Activated CD8-positive, alpha-beta T cell treated with anti-CD3 and anti-CD28 coated beads, Interleukin-2, amount 10 ng/mL, durations not matched to agents 7 days and 5 days (primary cell): ENCODE measurements at regions of chr4 and their contacts with region 1.

Region 1: GRCh38 chr4:47933840-47934239 is 19.5 kb upstream of the NFXL1 start:
- DNase-seq: no peak
- ATAC-seq: no peak
- H3K4me3 Mint-ChIP-seq: no peak overlapping the region
- H3K27ac Mint-ChIP-seq: no peak overlapping the region
- H3K4me1 Mint-ChIP-seq: no peaks in the 10 kb centered on the region
- H3K27me3 Mint-ChIP-seq: peaks cover 6% of the 10 kb centered on the region

Region 2: DNA sequence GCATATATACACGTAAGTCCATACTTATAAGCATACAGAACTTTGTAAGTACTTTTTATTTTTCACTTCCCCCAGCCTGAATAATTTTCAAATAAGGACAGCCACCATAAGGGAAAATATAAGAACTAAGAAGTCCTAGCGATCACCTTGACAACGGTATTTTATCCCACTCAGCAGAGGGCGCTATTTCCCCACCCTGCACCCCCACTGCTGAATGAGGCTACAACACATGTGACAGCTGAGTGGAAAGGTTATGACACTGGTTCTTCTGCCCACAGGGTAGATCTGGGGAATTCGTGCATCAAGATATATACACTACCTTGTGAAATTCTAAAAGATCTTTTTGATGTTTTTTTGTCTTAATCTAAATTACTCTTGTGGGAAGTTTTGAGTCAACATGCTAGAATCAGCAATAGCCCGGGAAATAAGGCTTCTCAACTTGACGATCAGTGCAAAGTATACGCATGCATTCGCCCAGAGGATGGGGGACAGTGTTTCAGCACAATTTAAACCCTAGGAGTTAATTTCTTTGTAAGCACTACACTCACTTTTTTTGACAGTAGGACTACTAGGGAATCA is 247.5 kb before region 1 on chr4:
- CTCF ChIA-PET with region 1: interaction called, 33 read pairs
- POLR2A ChIA-PET with region 1: no interaction called
- DNase-seq: peak; percentile 77
- ATAC-seq: peak; percentile 77
- H3K4me3 Mint-ChIP-seq: no peak overlapping the region
- H3K27ac Mint-ChIP-seq: no peak overlapping the region
- H3K4me1 Mint-ChIP-seq: no peaks in the 10 kb centered on the region
- H3K27me3 Mint-ChIP-seq: peaks cover 12% of the 10 kb centered on the region

Region 3: GRCh38 chr4:47704693-47705325 is 229.0 kb before region 1 on chr4:
- CTCF ChIA-PET with region 1: interaction called, 13 read pairs
- POLR2A ChIA-PET with region 1: no interaction called
- DNase-seq: peak; percentile 45
- ATAC-seq: peak; percentile 63
- H3K4me3 Mint-ChIP-seq: no peak overlapping the region
- H3K27ac Mint-ChIP-seq: no peak overlapping the region
- H3K4me1 Mint-ChIP-seq: no peaks in the 10 kb centered on the region
- H3K27me3 Mint-ChIP-seq: peaks cover 27% of the 10 kb centered on the region